BJ (cell line): ENCODE measurements at regions of chr3 and their contacts with region 1.

Region 1: GRCh38 chr3:196609343-196609775 is 30.1 kb upstream of the NRROS start:
- DNase-seq: no peak
- H3K4me3 ChIP-seq: no peak overlapping the region
- H3K27me3 ChIP-seq: peaks cover 2% of the 10 kb centered on the region
- CTCF ChIP-seq: peak; percentile 95

Region 2: DNA sequence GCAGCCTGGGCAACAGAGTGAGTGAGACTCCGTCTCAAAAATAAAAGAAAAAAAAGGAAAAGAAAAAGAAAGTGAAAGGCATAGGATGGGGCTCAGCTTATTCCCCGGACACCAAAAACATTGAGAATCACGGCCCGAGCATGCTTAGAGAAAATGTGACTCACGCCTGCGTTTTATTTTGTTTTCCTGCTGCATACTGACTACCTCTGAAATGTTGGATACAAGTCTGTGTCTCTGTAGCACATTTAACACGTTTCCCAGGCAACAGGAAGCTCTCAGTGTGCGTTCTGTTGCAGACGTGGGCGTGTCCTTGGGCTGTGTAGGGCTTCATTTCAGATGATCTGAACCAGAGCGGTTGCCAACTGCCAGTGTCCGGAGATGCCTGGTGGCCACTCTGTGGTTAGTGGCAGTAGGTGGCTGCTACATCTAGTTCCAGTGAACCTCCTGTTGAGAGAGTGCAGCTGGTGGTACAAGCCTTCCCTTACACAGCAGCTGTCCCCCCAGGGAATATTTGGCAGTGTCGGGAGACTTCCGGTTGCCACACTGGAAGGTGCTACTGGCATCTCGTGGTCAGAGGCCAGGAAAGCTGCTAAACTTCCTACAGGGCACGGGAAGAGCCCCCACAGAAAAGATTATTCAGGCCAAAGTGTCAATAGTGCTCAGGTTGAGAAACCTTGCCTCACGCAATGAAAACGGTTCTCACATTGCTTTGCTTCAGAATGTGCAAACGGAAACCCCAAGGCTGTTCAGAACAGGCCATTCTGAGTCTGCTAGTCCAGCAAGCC is 390.0 kb before region 1 on chr3:
- CTCF ChIA-PET with region 1: no interaction called
- POLR2A ChIA-PET with region 1: no interaction called
- DNase-seq: peak; percentile 87
- H3K4me3 ChIP-seq: peak overlapping the region; percentile 10; the same call in 1 of the 2 replicates
- H3K27me3 ChIP-seq: peaks cover 2% of the 10 kb centered on the region; the same call in 1 of the 2 replicates
- CTCF ChIP-seq: no peak

Region 3: GRCh38 chr3:196596355-196596754 is 13.0 kb before region 1 on chr3:
- CTCF ChIA-PET with region 1: interaction called, 12 read pairs
- POLR2A ChIA-PET with region 1: no interaction called
- DNase-seq: no peak
- H3K4me3 ChIP-seq: no peak overlapping the region
- H3K27me3 ChIP-seq: peaks cover 7% of the 10 kb centered on the region
- CTCF ChIP-seq: no peak

Region 4: DNA sequence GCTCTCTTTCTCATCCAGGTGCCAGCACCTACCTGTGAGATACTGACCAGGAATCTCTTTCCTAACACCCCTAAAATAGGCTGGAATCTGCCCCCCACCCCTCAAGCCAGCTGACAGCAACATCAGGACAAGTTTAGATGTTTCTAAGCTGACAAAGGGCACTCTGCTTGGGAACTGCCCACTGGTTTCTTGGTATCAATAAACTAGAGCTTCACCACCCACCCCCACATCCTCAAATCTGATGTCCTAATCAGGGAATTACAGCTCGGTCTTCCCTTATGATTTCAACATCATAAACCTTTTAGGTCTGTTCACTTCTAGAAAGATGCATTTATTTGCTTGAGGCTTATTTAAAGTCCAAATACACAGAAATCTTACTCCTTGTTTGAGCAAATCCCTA is 68.0 kb after region 1 on chr3:
- CTCF ChIA-PET with region 1: interaction called, 203 read pairs
- POLR2A ChIA-PET with region 1: no interaction called
- DNase-seq: no peak
- H3K4me3 ChIP-seq: no peak overlapping the region
- H3K27me3 ChIP-seq: peaks cover 3% of the 10 kb centered on the region; the same call in 1 of the 2 replicates
- CTCF ChIP-seq: no peak

Region 5: GRCh38 chr3:196684548-196685407 is 75.4 kb after region 1 on chr3:
- CTCF ChIA-PET with region 1: interaction called, 203 read pairs
- POLR2A ChIA-PET with region 1: no interaction called
- DNase-seq: no peak
- H3K4me3 ChIP-seq: no peak overlapping the region
- H3K27me3 ChIP-seq: 0 out of 2 replicates have a peak, but pooled peaks cover 3% of the 10 kb centered on the region
- CTCF ChIP-seq: peak; percentile 80

Region 6: DNA sequence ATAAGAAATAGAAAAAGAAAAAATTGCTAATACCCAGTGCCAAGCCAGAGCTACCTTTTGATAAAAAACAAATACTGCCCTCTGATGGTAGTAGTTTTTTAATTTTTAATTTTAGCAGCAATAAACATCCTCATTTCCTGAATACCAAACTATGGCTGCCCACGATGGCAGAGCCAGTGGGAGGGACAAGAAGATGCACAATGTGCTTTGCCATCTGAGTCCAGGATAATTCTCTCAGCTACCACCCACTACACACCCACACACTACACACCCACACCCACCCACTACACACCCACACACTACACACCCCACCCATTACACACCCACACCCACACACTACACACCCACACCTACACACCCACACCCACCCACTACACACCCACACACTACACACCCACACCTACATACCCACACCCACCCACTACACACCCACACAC is 84.9 kb after region 1 on chr3:
- CTCF ChIA-PET with region 1: interaction called, 203 read pairs
- POLR2A ChIA-PET with region 1: no interaction called
- DNase-seq: no peak
- H3K4me3 ChIP-seq: no peak overlapping the region
- H3K27me3 ChIP-seq: no peaks in the 10 kb centered on the region
- CTCF ChIP-seq: no peak; the same call in 1 of the 2 replicates